H1 (cell line): ENCODE measurements at regions of chr17 and their contacts with region 1.

Region 1: GRCh38 chr17:50087246-50087911 is 7.8 kb upstream of the PDK2 start:
- DNase-seq: peak in 1 of 2 experiments; percentile 94
- H3K4me3 ChIP-seq: no peak overlapping the region
- H3K27ac ChIP-seq: no peak overlapping the region
- H3K4me1 ChIP-seq: no peaks in the 10 kb centered on the region; a peak in 1 of 7 replicates
- H3K27me3 ChIP-seq: no peaks in the 10 kb centered on the region
- CTCF ChIP-seq: peak; percentile 98 to 99 (median 98)
- EP300 ChIP-seq: no peak
- POLR2A ChIP-seq: no peak
- RAD21 ChIP-seq: peak; percentile 96 to 98

Region 2: DNA sequence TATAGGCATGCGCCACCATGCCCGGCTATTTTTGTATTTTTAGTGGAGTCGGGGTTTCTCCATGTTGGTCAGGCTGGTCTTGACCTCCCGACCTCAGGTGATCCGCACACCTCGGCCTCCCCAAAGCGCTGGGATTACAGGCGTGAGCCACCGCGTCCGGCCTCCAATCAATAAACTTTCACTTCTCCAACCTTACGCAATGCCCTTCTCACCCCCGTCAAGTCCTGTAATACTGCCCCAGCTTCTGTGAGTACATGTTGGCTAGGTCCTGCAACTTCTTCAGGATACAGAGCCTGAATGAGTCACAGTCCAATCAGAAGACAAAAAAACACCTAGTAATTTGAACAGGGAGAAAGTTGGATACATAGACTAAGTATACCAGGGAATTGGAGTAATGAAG is 809.7 kb before region 1 on chr17:
- CTCF ChIA-PET with region 1: no interaction called
- POLR2A ChIA-PET with region 1: no interaction called
- DNase-seq: no peak
- H3K4me3 ChIP-seq: no peak overlapping the region
- H3K27ac ChIP-seq: no peak overlapping the region
- H3K4me1 ChIP-seq: peaks cover 0 to 3% (median 2%) of the 10 kb centered on the region in 4 experiments; a peak in 4 of 7 replicates
- H3K27me3 ChIP-seq: no peaks in the 10 kb centered on the region
- CTCF ChIP-seq: no peak
- EP300 ChIP-seq: no peak
- POLR2A ChIP-seq: no peak
- RAD21 ChIP-seq: no peak

Region 3: GRCh38 chr17:49914084-49914465 is 173.3 kb before region 1 on chr17:
- CTCF ChIA-PET with region 1: no interaction called
- POLR2A ChIA-PET with region 1: no interaction called
- DNase-seq: no peak
- H3K4me3 ChIP-seq: no peak overlapping the region
- H3K27ac ChIP-seq: no peak overlapping the region
- H3K4me1 ChIP-seq: peaks cover 3 to 19% (median 12%) of the 10 kb centered on the region in 4 experiments
- H3K27me3 ChIP-seq: peaks cover 9 to 53% (median 47%) of the 10 kb centered on the region in 4 experiments
- CTCF ChIP-seq: no peak
- EP300 ChIP-seq: no peak
- POLR2A ChIP-seq: no peak
- RAD21 ChIP-seq: no peak

Region 4: DNA sequence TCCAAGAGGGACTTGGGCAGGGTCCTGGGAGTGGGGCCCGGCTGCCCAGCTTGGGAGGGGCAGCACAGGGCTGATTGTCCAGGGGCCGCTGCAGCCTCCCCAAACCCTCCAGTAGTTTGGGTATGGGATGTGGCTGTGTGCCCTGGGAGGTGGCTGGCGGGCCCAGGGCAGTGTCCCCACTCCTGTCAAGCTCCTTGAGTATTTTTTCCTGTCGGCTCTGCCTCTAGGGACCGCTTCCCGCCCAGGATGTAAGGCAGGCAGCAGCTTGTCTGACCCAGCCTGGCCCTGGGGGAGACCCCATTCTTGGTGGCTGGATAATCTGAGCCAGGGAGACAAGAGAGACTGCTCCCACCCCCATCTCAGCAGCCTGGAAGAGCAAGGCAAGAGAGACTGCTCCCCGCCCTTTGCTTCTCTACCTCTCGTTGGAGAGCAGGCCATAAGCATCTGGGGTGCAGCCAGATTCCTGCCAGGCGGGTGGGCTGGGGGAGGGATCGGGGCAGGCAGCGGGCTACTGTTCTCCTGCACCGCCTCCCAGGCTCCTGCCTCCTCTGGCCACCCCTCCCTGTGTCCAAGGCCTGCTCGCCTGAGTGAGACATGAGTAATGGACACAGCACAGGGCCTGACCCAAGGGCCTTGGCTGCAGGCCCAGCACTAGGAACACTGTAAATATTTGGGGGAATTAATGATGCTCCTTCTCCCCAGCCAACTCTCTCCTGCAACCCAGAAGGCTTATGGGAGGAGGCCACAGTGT is 49.9 kb before region 1 on chr17:
- CTCF ChIA-PET with region 1: interaction called, 158 read pairs
- POLR2A ChIA-PET with region 1: no interaction called
- DNase-seq: no peak
- H3K4me3 ChIP-seq: no peak overlapping the region
- H3K27ac ChIP-seq: no peak overlapping the region
- H3K4me1 ChIP-seq: peaks cover 0 to 9% (median 0%) of the 10 kb centered on the region in 4 experiments; a peak in 3 of 7 replicates
- H3K27me3 ChIP-seq: no peaks in the 10 kb centered on the region; a peak in 1 of 7 replicates
- CTCF ChIP-seq: no peak
- EP300 ChIP-seq: no peak
- POLR2A ChIP-seq: no peak
- RAD21 ChIP-seq: no peak

Region 5: DNA sequence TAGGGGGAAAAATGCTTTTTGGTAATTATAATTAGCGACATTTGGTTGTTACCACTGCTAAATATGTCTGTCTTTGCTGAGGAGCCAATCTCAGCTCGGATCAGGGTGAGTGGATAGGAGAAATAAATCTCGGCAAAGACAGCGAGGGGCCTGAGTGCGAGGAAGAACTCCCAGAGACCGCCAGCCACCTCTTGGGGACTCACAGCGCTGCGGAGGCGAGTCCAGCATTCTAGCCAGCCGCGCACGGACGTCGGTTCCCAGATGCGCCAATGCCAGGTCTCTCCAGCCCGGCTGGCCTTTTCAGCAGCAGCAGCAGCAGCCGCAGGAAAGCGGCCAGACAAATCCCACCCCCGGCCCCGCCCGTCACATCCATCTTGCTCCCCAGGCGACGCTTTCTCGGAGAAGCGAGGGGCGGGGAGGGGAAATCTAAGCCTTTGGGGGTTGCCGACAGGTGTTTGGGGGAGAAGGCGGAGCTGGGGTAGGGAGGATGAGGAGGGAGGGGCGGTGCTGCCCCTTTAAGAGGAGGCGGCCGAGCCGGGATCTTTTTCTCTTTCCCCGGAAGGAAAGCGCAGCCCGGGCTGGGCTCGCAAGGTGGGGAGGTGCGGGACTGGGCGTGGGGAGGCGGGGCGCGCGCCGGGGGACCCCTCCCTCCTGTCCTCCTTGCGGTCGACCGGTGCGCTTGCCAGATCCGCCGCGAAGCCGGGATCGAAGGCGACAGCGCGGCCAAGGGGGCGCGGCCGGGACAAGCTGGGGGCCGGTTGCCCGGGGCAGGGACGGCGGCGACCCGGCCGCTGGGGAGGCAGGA is 31.8 kb before region 1 on chr17 and contains the start of gene ITGA3:
- CTCF ChIA-PET with region 1: interaction called, 39 read pairs
- POLR2A ChIA-PET with region 1: interaction called, 7 read pairs
- DNase-seq: peak; percentile 84 to 89
- H3K4me3 ChIP-seq: peak within 1 kb of the TSS; percentile 37 to 65 (median 58)
- H3K27ac ChIP-seq: no peak within 1 kb of the TSS
- H3K4me1 ChIP-seq: peaks cover 11 to 21% (median 15%) of the 10 kb centered on the region in 4 experiments
- H3K27me3 ChIP-seq: peaks cover 0 to 13% (median 11%) of the 10 kb centered on the region in 4 experiments; a peak in 5 of 7 replicates
- CTCF ChIP-seq: peak in 2 of 3 experiments; percentile 4 to 17; a peak in 3 of 4 replicates
- EP300 ChIP-seq: no peak
- POLR2A ChIP-seq: no peak
- RAD21 ChIP-seq: no peak
- total RNA-seq, gene ITGA3: 21.7 and 24.2 TPM in 2 replicates

Region 6: GRCh38 chr17:50067996-50068395 is 19.4 kb before region 1 on chr17:
- CTCF ChIA-PET with region 1: interaction called, 18 read pairs
- POLR2A ChIA-PET with region 1: no interaction called
- DNase-seq: no peak
- H3K4me3 ChIP-seq: no peak overlapping the region
- H3K27ac ChIP-seq: no peak overlapping the region
- H3K4me1 ChIP-seq: peaks cover 0 to 3% (median 2%) of the 10 kb centered on the region in 4 experiments; a peak in 4 of 7 replicates
- H3K27me3 ChIP-seq: no peaks in the 10 kb centered on the region
- CTCF ChIP-seq: peak in 1 of 3 experiments; percentile 6; a peak in 1 of 4 replicates
- EP300 ChIP-seq: no peak
- POLR2A ChIP-seq: no peak
- RAD21 ChIP-seq: no peak

Region 7: GRCh38 chr17:50101346-50102163 is 14.2 kb after region 1 on chr17:
- CTCF ChIA-PET with region 1: interaction called, 412 read pairs
- POLR2A ChIA-PET with region 1: interaction called, 3 read pairs
- DNase-seq: no peak
- H3K4me3 ChIP-seq: peak overlapping the region in 2 of 4 experiments; percentile 15 to 16; a peak in 3 of 8 replicates
- H3K27ac ChIP-seq: no peak overlapping the region
- H3K4me1 ChIP-seq: peaks cover 0 to 19% (median 12%) of the 10 kb centered on the region in 4 experiments; a peak in 6 of 7 replicates
- H3K27me3 ChIP-seq: no peaks in the 10 kb centered on the region; a peak in 1 of 7 replicates
- CTCF ChIP-seq: no peak
- EP300 ChIP-seq: no peak
- POLR2A ChIP-seq: no peak
- RAD21 ChIP-seq: no peak